SK-N-SH (cell line): ENCODE measurements at regions of chr4 and their contacts with region 1.

Region 1: DNA sequence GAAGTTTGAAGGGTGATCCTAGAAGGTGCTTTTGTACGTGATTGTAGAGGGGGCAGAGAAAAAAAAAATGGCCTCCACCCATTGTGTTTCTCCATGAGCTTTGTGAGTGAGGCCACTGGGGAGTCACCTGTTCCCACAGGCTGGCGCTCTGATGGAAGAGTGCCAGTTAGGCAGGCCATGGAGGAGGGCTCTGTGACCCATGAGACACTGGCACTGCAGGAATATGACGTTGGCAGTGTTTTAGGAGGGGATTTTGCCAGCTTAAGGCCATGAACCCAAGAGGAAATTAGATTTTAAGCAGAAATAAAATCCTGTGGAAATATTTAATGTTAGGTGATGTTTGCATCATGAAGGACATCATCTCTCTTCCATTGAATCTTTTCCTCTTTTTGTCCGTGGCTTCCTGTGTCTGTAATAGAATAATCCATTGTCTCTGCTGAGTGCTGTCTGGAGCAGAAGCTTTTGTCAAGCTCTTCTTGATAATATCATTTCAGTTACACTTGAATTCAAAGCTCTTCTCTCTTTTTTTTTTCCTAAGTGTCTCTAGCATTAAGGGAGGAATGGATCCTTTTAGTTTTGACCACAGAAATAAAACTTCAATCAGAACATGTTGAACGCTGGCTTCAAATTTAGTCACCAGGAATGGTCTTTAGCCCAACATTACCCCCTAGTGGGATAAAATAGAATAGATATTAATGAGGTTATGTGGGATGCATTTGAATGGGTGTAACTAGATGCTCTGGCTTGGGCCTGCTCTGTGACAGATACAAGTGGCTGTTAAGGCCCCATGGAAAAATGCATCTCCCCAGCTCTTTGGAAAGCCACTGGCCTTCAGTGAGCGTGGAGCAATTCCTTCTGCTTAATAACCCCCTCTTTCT is 41.0 kb upstream of the UCP1 start:
- DNase-seq: peak; percentile 83
- H3K4me3 ChIP-seq: no peak overlapping the region
- H3K27ac ChIP-seq: peak overlapping the region in 1 of 2 experiments; percentile 45; a peak in 2 of 4 replicates
- H3K4me1 ChIP-seq: peaks cover 0 to 5% of the 10 kb centered on the region in 2 experiments; a peak in 2 of 4 replicates
- H3K27me3 ChIP-seq: no peaks in the 10 kb centered on the region; the same call in 1 of the 2 replicates
- CTCF ChIP-seq: peak; percentile 68
- EP300 ChIP-seq: no peak
- RAD21 ChIP-seq: peak; percentile 92

Region 2: GRCh38 chr4:140195806-140196205 is 414.0 kb before region 1 on chr4:
- CTCF ChIA-PET with region 1: no interaction called
- POLR2A ChIA-PET with region 1: no interaction called
- DNase-seq: no peak
- H3K4me3 ChIP-seq: no peak overlapping the region
- H3K27ac ChIP-seq: no peak overlapping the region
- H3K4me1 ChIP-seq: no peaks in the 10 kb centered on the region
- H3K27me3 ChIP-seq: no peaks in the 10 kb centered on the region
- CTCF ChIP-seq: no peak
- EP300 ChIP-seq: no peak
- RAD21 ChIP-seq: no peak

Region 3: DNA sequence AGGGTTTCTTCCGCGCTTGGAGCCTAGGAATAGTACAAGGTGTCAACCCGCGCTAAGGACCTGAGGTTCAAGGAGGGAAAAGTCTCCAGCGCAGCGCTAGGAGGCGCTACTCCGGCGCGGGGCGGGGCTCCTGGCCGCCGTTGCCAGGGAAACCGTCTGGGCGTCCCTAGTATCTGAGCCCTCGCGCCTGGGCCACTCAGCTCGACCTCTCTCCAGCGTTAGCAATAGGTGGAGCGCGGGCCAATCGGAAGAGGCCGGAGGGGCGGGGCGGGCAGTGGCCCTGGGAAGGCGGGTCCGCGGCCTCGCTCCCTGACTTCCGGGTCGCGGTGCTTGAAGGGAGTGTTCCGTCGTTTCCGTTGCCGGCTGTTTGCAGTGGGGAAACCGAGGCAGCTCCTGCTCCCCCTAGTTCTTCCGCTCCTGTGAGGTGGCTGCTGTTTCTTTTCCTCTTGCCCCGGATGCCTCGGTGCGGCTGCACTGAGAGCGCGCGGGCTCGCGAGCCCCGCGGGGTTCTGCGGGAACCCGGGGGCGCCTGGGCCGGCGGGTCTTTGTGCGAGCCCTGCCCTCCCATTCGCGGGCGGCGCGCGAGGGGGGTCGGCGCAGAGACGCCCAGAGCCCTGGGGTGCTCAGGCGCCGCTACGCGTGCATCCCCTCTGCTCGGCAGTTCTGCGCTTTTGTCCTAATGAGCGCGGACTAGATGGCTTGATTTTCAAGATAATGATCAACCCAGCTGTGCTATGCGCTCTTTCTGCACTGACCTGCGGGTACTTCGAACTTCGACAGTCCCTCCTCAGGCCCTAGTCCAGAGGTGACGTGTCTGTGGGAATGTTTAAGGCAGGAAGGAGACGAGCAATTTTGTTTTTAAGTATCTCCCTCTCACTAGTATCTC is 85.7 kb before region 1 on chr4 and contains the start of gene ELMOD2:
- CTCF ChIA-PET with region 1: interaction called, 13 read pairs
- POLR2A ChIA-PET with region 1: no interaction called
- DNase-seq: peak; percentile 98
- H3K4me3 ChIP-seq: peak within 1 kb of the TSS; percentile 82 to 93
- H3K27ac ChIP-seq: peak within 1 kb of the TSS; percentile 58 to 93
- H3K4me1 ChIP-seq: peaks cover 9 to 11% of the 10 kb centered on the region in 2 experiments; a peak in 3 of 4 replicates
- H3K27me3 ChIP-seq: no peaks in the 10 kb centered on the region
- CTCF ChIP-seq: peak; percentile 95
- EP300 ChIP-seq: peak; percentile 9 to 18; a peak in 2 of 4 replicates
- RAD21 ChIP-seq: peak; percentile 55
- polyA plus RNA-seq, gene ELMOD2: 5.0 and 7.1 TPM in 2 replicates

Region 4: DNA sequence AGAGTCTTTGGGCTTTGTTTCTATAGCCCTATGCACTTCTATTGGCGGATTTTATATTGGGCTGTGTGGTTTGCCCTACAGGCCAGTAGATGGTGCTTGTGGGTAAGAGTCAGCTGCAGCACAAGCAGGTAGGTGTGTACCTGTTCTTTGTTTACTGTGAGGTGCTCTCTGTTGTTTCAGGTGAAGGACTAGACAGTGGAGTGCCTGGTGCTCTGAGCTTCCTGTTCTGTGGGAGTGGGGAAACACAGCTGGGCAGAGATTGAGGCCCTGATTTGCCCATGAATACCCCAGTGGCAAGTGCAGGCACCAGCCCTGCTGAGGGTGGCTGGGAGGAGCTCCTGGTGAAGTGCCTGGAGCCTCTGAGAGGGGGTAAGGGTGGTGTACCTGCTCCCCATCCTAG is 14.7 kb before region 1 on chr4:
- CTCF ChIA-PET with region 1: interaction called, 19 read pairs
- POLR2A ChIA-PET with region 1: no interaction called
- DNase-seq: no peak
- H3K4me3 ChIP-seq: no peak overlapping the region
- H3K27ac ChIP-seq: no peak overlapping the region
- H3K4me1 ChIP-seq: no peaks in the 10 kb centered on the region
- H3K27me3 ChIP-seq: no peaks in the 10 kb centered on the region; the same call in 1 of the 2 replicates
- CTCF ChIP-seq: peak; percentile 42
- EP300 ChIP-seq: no peak
- RAD21 ChIP-seq: peak; percentile 31; the same call in 1 of the 2 replicates

Region 5: GRCh38 chr4:140626661-140627376 is 17.0 kb after region 1 on chr4:
- CTCF ChIA-PET with region 1: interaction called, 14 read pairs
- POLR2A ChIA-PET with region 1: no interaction called
- DNase-seq: peak; percentile 40
- H3K4me3 ChIP-seq: no peak overlapping the region
- H3K27ac ChIP-seq: peak overlapping the region in 1 of 2 experiments; percentile 34; a peak in 2 of 4 replicates
- H3K4me1 ChIP-seq: no peaks in the 10 kb centered on the region; a peak in 1 of 4 replicates
- H3K27me3 ChIP-seq: no peaks in the 10 kb centered on the region
- CTCF ChIP-seq: peak; percentile 37; the same call in 1 of the 2 replicates
- EP300 ChIP-seq: no peak
- RAD21 ChIP-seq: peak; percentile 70

Region 6: GRCh38 chr4:140851032-140851636 is 241.3 kb after region 1 on chr4:
- CTCF ChIA-PET with region 1: interaction called, 22 read pairs
- POLR2A ChIA-PET with region 1: no interaction called
- DNase-seq: peak; percentile 54
- H3K4me3 ChIP-seq: no peak overlapping the region
- H3K27ac ChIP-seq: no peak overlapping the region
- H3K4me1 ChIP-seq: no peaks in the 10 kb centered on the region; a peak in 1 of 4 replicates
- H3K27me3 ChIP-seq: no peaks in the 10 kb centered on the region
- CTCF ChIP-seq: peak; percentile 95
- EP300 ChIP-seq: no peak
- RAD21 ChIP-seq: peak; percentile 98